Colonic mucosa (tissue), 4 donors: ENCODE measurements at regions of chr1 and their contacts with region 1.

Region 1: GRCh38 chr1:243325305-243325890 is 69.6 kb downstream of the SDCCAG8 start:
- DNase-seq: peak; percentile 21
- H3K4me3 ChIP-seq: no peak overlapping the region
- H3K27ac ChIP-seq: no peak overlapping the region
- H3K4me1 ChIP-seq: no peaks in the 10 kb centered on the region
- H3K27me3 ChIP-seq: no peaks in the 10 kb centered on the region
- CTCF ChIP-seq: peak; percentile 66

Region 2: DNA sequence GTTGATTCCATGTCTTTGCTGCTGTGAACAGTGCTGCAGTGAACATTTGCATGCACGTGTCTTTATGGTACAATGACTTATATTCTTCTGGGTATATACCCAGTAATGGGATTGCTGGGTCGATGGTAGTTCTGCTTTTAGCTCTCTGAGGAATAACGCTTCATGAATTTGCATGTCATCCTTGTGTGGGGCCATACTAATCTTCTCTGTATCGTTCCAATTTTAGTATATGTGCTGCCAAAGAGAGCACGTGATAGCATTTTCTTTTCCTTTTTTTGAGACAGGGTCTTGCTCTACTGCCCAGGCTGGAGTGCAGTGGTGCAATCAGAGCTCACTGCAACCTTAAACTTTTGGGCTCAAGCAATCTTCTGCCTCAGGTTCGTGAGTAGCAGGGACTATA is 1301.6 kb before region 1 on chr1:
- intact Hi-C with region 1: loop called (anchors 10 kb)
- DNase-seq: no peak
- H3K4me3 ChIP-seq: no peak overlapping the region
- H3K27ac ChIP-seq: no peak overlapping the region
- H3K4me1 ChIP-seq: no peaks in the 10 kb centered on the region
- H3K27me3 ChIP-seq: no peaks in the 10 kb centered on the region
- CTCF ChIP-seq: no peak

Region 3: GRCh38 chr1:242467556-242468145 is 857.7 kb before region 1 on chr1:
- intact Hi-C with region 1: loop called (anchors 5 kb)
- DNase-seq: peak; percentile 37
- H3K4me3 ChIP-seq: no peak overlapping the region
- H3K27ac ChIP-seq: no peak overlapping the region
- H3K4me1 ChIP-seq: no peaks in the 10 kb centered on the region
- H3K27me3 ChIP-seq: no peaks in the 10 kb centered on the region
- CTCF ChIP-seq: peak; percentile 44